Sciatic nerve (tissue), 2 donors: ENCODE measurements at regions of chr4 and their contacts with region 1.

Region 1: GRCh38 chr4:124325661-124326060 is 386.9 kb downstream of the ANKRD50 start:
- DNase-seq: no peak
- ATAC-seq: no peak

Region 2: DNA sequence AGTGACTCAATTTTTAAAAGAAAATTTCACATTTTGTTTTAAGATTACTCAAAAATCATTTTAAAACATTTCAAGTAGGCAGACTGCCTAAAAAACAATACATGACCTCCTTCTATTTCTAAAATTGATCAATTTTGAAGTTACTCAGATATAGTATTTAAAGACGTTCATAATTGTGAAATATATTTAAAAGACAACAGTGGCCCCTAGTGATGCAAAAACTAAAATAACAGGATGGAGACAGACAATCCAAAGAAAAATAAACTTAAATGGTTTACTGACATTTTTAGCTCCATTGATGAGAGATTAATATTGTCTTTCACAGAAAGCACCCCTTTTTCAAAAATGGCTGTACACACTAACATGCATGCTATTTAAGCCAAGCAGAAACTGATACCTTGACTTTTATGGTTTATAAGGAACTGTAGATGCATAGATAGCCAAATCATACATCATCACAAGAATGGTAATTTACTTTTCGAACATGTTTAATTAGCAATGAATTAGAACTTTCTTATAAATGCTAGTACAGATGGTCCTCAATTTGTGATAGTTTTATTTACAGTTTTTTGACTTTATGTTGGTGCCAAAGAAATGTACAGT is 919.3 kb after region 1 on chr4:
- intact Hi-C with region 1: loop called (anchors 5 kb)
- DNase-seq: no peak
- ATAC-seq: no peak

Region 3: GRCh38 chr4:125283707-125284279 is 958.1 kb after region 1 on chr4:
- intact Hi-C with region 1: loop called (anchors 5 kb)
- DNase-seq: no peak
- ATAC-seq: no peak